Activated T-helper 2 cell treated with anti-CD3 and anti-CD28 coated beads, Interferon-gamma antibody, Interleukin-2, Interleukin-4, amounts not matched to agents 10 μg/mL and 5 μg/mL and 100 μg/mL, durations not matched to agents 14 hours and 24 hours and 36 hours (primary cell): ENCODE measurements at regions of chr12 and their contacts with region 1.

Region 1: DNA sequence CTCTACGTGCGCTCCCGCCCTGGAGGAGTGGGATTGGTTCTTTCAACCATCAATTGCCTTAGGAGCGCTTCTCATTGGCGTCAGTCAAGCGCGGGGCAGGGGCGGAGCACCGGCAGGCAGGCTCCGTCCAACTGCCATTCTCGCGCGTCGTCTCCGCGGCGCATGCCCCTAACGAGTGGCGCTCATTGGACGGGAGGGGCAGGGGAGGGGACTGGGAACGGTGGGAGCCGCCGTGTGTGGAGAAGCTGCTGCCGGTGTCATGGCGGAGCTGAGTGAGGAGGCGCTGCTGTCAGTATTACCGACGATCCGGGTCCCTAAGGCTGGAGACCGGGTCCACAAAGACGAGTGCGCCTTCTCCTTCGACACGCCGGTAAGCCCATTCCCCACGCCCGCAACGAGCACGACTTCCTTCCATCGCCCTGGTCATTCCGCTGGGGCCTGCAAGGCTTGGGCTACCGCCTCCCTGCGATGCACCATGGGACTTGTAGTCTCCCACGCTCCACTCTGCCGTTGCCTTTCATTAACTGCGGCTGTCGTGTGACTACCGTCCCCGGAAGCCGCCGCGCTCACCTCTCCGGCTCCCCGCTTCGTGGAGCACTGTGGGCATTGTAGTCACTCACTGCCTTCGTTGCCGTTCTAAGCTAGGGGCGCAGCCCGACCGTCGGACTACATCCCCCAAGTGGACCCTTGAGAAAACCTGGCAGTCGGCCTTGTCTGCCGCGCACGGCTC is at the start of gene USP5:
- DNase-seq: peak; percentile 99
- H3K4me3 Mint-ChIP-seq: peak within 1 kb of the TSS; percentile 96
- H3K27ac Mint-ChIP-seq: peak within 1 kb of the TSS; percentile 97
- H3K4me1 Mint-ChIP-seq: peaks cover 34% of the 10 kb centered on the region
- H3K27me3 Mint-ChIP-seq: no peaks in the 10 kb centered on the region
- total RNA-seq, gene USP5: 133 and 134 TPM in 2 replicates

Region 2: GRCh38 chr12:6567112-6567670 is 284.9 kb before region 1 on chr12:
- intact Hi-C with region 1: loop called (anchors 5 kb)
- DNase-seq: no peak
- H3K4me3 Mint-ChIP-seq: peak overlapping the region; percentile 100
- H3K27ac Mint-ChIP-seq: peak overlapping the region; percentile 97
- H3K4me1 Mint-ChIP-seq: peaks cover 28% of the 10 kb centered on the region
- H3K27me3 Mint-ChIP-seq: no peaks in the 10 kb centered on the region

Region 3: GRCh38 chr12:6688999-6689882 is 162.8 kb before region 1 on chr12 and contains the start of gene ZNF384:
- intact Hi-C with region 1: loop called (anchors 1 kb)
- DNase-seq: peak; percentile 95
- H3K4me3 Mint-ChIP-seq: peak within 1 kb of the TSS; percentile 96
- H3K27ac Mint-ChIP-seq: peak within 1 kb of the TSS; percentile 92
- H3K4me1 Mint-ChIP-seq: peaks cover 35% of the 10 kb centered on the region
- H3K27me3 Mint-ChIP-seq: no peaks in the 10 kb centered on the region
- total RNA-seq, gene ZNF384: 73.7 and 75.4 TPM in 2 replicates

Region 4: DNA sequence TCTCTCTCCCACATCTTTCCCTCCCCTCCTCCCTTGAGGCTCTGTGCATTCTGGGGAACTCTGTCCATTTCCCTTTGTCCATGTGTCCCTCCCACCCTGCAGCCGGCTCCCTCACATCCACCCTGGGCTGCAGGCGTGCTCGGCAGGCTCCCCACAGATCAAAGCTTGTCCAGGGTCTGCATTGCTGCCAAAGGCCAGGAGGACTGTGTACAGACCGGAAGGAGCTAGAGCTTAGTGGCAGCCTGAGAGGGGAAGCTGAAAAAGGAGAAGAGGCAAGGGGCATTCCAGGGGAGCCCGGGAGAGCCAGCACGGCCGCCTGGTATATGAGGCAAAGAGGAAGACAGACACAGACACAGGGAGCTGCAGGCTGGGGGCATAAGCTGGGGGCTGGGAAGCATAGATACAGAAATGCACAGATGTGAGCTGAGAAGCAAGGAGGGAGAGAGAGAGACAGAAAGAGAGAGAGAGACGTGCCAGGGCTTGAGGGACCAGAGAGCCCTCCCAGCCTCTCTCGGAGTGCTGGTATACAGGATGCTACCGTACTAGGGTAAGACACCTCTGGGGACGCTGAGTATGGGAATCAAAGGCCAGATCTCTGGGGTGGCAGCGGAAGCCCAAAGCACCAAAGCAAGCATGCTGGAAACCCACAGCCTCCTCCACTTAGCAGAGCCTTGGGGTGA is 59.4 kb before region 1 on chr12:
- intact Hi-C with region 1: loop called (anchors 2 kb)
- DNase-seq: peak; percentile 49
- H3K4me3 Mint-ChIP-seq: peak overlapping the region; percentile 99
- H3K27ac Mint-ChIP-seq: peak overlapping the region; percentile 95
- H3K4me1 Mint-ChIP-seq: peaks cover 53% of the 10 kb centered on the region
- H3K27me3 Mint-ChIP-seq: no peaks in the 10 kb centered on the region

Region 5: DNA sequence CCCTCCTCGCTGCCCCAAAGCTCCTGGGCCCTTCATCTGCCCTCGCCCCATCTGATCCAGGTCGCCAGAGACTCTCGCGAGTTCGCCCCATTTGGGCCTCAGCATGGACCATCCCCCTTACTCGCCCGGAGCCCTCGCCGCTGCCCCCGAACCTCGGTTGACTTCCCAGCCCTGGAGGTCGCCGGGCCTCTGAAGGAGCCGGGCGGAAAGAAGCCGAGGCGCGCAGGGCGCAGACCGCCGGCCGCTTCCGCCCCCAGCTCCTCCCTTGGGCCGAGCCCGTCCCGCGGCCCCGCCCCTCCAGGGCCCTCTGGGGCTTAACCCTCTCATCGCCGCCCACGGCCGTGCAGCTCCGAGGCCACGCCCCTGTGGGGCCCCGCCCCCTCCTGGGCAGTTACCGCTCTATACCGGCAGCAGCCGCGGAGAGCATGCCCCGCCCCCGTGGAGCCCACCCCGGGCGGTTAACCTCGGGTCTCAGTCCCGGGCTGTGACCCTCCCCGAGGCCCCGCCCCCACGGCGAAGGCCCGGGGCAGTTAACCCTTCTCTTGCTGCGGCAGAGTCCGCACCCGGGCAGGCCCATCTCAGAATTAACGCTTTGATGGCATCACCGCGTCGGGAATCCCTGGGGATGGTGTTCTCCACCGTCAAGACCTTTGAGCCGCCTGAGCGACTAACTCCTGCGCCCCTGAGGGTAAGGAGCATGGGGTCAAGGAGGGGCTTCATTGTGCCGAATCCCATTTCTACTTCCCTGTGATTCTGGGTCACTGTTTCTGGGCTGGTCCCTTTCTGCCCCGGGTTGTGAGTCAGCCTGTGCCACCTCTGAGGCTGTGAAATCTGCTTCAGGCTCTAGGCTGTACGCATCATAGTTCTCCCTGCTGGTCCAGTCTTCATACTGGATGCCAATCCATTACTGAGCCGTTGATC is 21.3 kb after region 1 on chr12 and contains the start of gene SPSB2:
- intact Hi-C with region 1: loop called (anchors 1 kb)
- DNase-seq: peak; percentile 99
- H3K4me3 Mint-ChIP-seq: peak within 1 kb of the TSS; percentile 92
- H3K27ac Mint-ChIP-seq: peak within 1 kb of the TSS; percentile 84
- H3K4me1 Mint-ChIP-seq: peaks cover 52% of the 10 kb centered on the region
- H3K27me3 Mint-ChIP-seq: no peaks in the 10 kb centered on the region
- total RNA-seq, gene SPSB2: 3.7 and 4.1 TPM in 2 replicates

Region 6: DNA sequence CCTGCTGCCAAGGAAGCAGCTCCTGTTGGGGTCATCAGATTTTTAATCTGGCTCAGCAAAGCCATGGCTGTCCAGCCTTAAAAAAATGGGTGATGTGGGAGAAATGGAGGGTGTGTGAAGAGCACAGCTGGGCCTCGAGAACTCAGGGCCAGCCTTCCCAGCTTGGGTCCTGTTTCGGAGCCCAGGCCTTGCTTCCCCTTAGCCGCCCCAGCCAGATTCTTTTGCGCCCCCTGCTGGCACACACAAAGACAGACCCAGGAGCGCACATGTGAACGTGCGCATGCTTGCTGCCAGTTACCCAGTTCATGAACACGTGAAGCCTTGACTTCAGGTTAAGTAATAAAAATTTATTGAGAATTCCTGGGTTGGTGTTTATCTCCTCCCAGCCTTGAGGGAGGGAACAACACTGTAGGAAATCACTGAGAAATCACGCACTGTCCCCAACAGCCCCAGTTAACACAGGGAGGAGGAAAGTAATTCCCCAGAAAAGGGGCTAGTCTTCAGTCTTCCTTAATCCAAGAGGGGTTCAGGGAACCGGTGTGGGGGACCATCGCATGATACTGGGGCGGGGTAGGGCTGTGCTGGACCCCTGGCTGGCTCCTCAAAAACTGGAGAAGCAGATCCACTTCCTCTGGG is 113.1 kb after region 1 on chr12:
- intact Hi-C with region 1: loop called (anchors 1 kb)
- DNase-seq: peak; percentile 80
- H3K4me3 Mint-ChIP-seq: no peak overlapping the region
- H3K27ac Mint-ChIP-seq: peak overlapping the region; percentile 75
- H3K4me1 Mint-ChIP-seq: peaks cover 48% of the 10 kb centered on the region
- H3K27me3 Mint-ChIP-seq: no peaks in the 10 kb centered on the region